Astrocyte of the cerebellum (primary cell): ENCODE measurements at regions of chr14 and their contacts with region 1.

Region 1: DNA sequence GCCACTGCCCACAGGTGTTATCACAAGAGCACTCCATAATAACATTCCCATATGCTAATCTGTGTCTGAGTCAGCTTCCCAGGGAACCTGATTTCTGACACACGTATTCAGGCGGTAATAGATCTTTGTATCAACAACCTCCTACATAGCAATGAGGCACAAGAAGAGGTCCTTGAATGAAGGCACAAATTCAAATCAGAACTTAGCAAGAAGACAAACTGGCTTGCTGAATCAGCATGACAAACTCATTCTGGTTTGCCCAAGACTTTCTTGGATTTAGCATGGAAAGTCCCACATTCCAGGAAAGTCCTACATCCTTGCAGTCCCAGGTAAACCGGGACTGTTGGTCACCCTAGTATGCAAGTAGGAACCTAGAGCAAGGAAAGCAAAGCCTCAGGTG is 33.9 kb upstream of the RNU6-7 start:
- DNase-seq: no peak
- H3K4me3 ChIP-seq: no peak overlapping the region
- CTCF ChIP-seq: no peak

Region 2: DNA sequence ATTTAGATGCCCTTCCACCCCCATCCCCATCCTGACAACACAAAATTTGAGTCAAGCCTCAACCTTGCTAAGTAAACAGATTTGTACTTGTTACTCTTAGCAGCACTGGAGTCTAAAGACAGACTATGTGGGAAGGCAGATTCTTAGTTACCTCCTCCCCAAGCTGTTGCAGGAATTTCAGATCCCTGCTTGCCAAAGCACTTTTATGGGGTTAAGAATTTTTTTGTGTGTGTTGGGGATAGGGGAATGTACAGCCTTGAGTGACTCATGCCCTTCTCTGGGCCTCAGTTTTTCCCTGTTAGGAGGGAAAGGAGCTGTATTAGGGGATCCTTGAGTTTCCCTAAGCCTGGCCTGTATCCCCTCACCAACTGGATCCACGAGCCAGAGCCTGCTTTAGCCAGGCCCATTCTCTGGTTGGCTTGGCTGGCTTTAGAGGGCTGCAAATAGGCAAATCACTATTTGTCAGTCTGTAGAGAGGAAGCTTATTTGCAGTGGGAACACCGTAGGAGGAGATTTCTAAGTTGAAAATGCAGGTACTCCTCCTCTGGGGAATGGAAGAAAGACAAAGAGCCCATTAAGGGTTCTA is 62.9 kb after region 1 on chr14:
- in situ Hi-C with region 1: loop called (anchors 5 kb)
- DNase-seq: no peak
- H3K4me3 ChIP-seq: no peak overlapping the region
- CTCF ChIP-seq: no peak